Naive thymus-derived CD4-positive, alpha-beta T cell (primary cell): ENCODE measurements at regions of chr18 and their contacts with region 1.

Region 1: GRCh38 chr18:59268721-59269562 is 4.3 kb downstream of the RAX start:
- DNase-seq: peak in 1 of 9 donors; percentile 61
- ATAC-seq: peak; percentile 40
- H3K4me3 ChIP-seq: no peak overlapping the region
- H3K4me3 Mint-ChIP-seq: peak overlapping the region in 7 of 10 donors; percentile 36 to 83 (median 71)
- H3K27ac ChIP-seq: no peak overlapping the region
- H3K27ac Mint-ChIP-seq: no peak overlapping the region
- H3K4me1 ChIP-seq: no peaks in the 10 kb centered on the region
- H3K4me1 Mint-ChIP-seq: peaks cover 16 to 54% (median 27%) of the 10 kb centered on the region in 7 donors
- H3K27me3 ChIP-seq: peaks cover 7% of the 10 kb centered on the region in 2 donors
- H3K27me3 Mint-ChIP-seq: peaks cover 64 to 86% (median 71%) of the 10 kb centered on the region in 5 donors

Region 2: DNA sequence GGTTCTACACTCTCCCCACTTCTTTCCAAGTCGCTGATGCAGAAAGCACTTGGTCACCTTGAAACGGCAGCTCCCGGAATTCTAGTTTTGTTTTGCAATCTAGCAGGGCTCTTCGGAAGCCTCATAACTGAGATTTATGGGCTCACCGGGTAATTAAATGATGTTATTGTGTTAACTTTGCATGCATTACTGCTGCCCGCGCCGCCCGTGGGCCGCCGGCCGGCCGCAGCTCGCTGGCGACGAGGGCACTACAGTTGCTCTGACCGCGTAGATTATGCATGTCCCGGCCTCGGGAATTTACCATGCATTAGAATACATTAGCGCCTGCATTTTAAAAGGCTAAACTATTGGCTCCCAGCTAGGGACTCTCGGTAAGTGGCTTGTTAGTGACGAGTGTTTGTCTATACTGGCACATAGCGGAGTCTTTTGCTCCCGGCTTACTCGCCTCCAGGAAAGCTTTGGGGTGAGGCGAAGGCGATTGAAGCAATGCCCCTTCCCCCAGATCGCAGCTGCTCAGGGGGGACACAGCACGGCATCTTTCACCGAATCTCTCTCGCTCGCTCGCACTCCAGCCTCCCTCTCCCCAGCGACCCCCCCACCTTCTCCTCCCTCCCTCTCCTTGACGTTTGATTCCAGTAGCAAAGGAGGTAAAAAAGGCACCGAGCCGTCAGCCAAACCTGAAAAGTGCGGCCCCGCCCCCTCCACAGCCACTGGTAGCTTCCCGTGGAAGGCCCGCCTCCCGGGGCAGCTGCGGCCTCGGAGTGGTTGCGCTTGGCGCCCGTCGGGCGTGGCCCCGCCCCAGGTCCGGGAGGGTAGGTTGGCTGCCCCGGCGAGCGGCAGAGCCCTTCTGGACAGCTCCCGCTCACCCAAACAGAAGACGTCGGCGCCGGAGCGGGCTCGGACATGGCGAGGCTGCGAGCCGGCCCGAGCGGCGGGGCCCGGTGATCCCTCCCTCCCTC is 1834.1 kb before region 1 on chr18 and contains the start of gene ONECUT2:
- CTCF ChIA-PET with region 1: no interaction called
- POLR2A ChIA-PET with region 1: no interaction called
- intact Hi-C with region 1: loop called in 1 of 2 experiments (anchors 5 kb)
- DNase-seq: peak in 8 of 9 donors; percentile 23 to 47 (median 40)
- ATAC-seq: peak; percentile 87
- H3K4me3 ChIP-seq: peak within 1 kb of the TSS; percentile 27
- H3K4me3 Mint-ChIP-seq: peak within 1 kb of the TSS; percentile 68 to 84 (median 76)
- H3K27ac ChIP-seq: no peak within 1 kb of the TSS
- H3K27ac Mint-ChIP-seq: peak within 1 kb of the TSS in 4 of 9 donors; percentile 8 to 77 (median 46)
- H3K4me1 ChIP-seq: peaks cover 1 to 12% of the 10 kb centered on the region in 2 donors
- H3K4me1 Mint-ChIP-seq: peaks cover 20 to 64% (median 42%) of the 10 kb centered on the region in 7 donors
- H3K27me3 ChIP-seq: peaks cover 8 to 44% of the 10 kb centered on the region in 2 donors
- H3K27me3 Mint-ChIP-seq: peaks cover 78 to 90% (median 84%) of the 10 kb centered on the region in 5 donors
- total RNA-seq, gene ONECUT2: not detected

Region 3: DNA sequence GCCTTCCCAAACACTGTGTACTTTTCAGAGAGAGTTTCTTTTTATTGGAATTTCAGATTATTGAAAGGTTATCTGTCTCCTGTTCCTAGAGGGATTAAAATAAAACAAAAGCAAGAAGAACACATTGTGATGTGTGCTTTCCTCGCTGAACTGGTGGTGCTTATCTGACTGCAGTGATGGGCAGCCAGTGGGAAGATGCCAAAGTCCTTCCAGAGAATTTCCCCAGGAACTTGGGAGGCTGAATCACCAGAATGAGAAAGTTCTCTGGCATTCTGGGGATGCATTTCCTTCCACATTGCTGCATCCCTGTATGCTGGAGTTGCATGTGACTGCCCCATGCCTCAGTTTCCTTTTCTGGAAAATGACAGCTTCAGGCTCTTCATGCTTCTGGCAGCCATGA is 183.1 kb before region 1 on chr18:
- CTCF ChIA-PET with region 1: no interaction called
- POLR2A ChIA-PET with region 1: no interaction called
- intact Hi-C with region 1: loop called in 1 of 2 experiments (anchors 1 kb)
- DNase-seq: no peak
- ATAC-seq: no peak
- H3K4me3 ChIP-seq: no peak overlapping the region
- H3K4me3 Mint-ChIP-seq: no peak overlapping the region
- H3K27ac ChIP-seq: no peak overlapping the region
- H3K27ac Mint-ChIP-seq: no peak overlapping the region
- H3K4me1 ChIP-seq: peaks cover 0 to 8% of the 10 kb centered on the region in 2 donors
- H3K4me1 Mint-ChIP-seq: peaks cover 3 to 18% (median 13%) of the 10 kb centered on the region in 7 donors
- H3K27me3 ChIP-seq: peaks cover 0 to 4% of the 10 kb centered on the region in 2 donors
- H3K27me3 Mint-ChIP-seq: peaks cover 12 to 22% (median 20%) of the 10 kb centered on the region in 5 donors

Region 4: GRCh38 chr18:59249205-59249774 is 19.7 kb before region 1 on chr18:
- CTCF ChIA-PET with region 1: no interaction called
- POLR2A ChIA-PET with region 1: no interaction called
- intact Hi-C with region 1: loop called in 1 of 2 experiments (anchors 2 kb)
- DNase-seq: peak in 3 of 9 donors; percentile 9 to 17 (median 16)
- ATAC-seq: no peak
- H3K4me3 ChIP-seq: no peak overlapping the region
- H3K4me3 Mint-ChIP-seq: no peak overlapping the region
- H3K27ac ChIP-seq: no peak overlapping the region
- H3K27ac Mint-ChIP-seq: no peak overlapping the region
- H3K4me1 ChIP-seq: no peaks in the 10 kb centered on the region
- H3K4me1 Mint-ChIP-seq: peaks cover 0 to 2% (median 0%) of the 10 kb centered on the region in 7 donors
- H3K27me3 ChIP-seq: no peaks in the 10 kb centered on the region
- H3K27me3 Mint-ChIP-seq: peaks cover 49 to 67% (median 63%) of the 10 kb centered on the region in 5 donors

Region 5: GRCh38 chr18:59340817-59341216 is 71.9 kb after region 1 on chr18:
- CTCF ChIA-PET with region 1: no interaction called
- POLR2A ChIA-PET with region 1: no interaction called
- intact Hi-C with region 1: no loop called
- DNase-seq: no peak
- ATAC-seq: no peak
- H3K4me3 ChIP-seq: no peak overlapping the region
- H3K4me3 Mint-ChIP-seq: peak overlapping the region in 1 of 10 donors; percentile 41
- H3K27ac ChIP-seq: no peak overlapping the region
- H3K27ac Mint-ChIP-seq: peak overlapping the region in 2 of 9 donors; percentile 9 to 32
- H3K4me1 ChIP-seq: no peaks in the 10 kb centered on the region
- H3K4me1 Mint-ChIP-seq: peaks cover 8 to 41% (median 37%) of the 10 kb centered on the region in 7 donors
- H3K27me3 ChIP-seq: no peaks in the 10 kb centered on the region
- H3K27me3 Mint-ChIP-seq: no peaks in the 10 kb centered on the region

Region 6: DNA sequence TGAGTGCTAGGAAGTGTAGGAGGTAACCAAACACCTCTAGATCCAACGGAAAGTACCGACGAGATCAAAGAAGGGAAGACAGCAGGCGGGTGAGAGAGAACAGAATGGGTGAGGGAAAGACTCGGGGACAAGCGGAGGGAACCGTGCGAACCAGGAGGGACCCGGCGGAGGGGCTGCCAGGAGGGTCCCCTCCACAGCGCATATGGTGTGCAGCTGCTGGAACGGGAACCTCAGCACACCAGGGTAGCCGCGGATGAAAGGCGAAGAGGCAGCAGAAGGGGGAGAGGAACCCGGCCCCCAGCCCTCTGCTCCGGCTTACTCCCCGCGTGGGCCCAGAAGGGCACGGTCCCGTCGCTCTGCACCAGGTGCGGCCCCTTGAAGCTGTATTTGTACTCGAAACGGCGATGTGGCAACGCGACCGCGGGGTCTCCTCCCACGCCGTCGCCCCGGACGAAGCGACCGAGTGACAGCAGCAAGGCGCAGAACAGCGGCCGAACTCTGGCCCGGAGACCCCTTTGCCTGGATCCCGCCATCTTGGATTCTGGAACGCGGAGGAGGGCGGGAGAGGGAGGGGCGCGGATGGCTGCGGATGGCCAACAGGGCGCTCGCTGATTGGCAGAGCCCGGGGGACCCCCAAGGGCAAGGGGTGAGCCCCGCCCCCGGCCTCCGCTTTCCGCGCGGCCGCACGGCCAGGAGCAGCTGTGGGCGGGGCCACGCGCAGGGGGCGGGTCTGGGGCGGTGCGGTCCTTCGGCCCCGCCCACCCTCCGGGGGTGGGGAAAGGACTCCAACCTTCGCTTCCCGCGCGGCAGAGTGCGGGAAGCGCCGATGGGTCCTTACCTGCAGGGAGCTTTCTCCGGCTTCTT is 90.0 kb after region 1 on chr18 and contains the start of gene LMAN1:
- CTCF ChIA-PET with region 1: no interaction called
- POLR2A ChIA-PET with region 1: no interaction called
- intact Hi-C with region 1: loop called in 1 of 2 experiments (anchors 5 kb)
- DNase-seq: peak; percentile 73 to 98 (median 83)
- ATAC-seq: peak; percentile 97
- H3K4me3 ChIP-seq: peak within 1 kb of the TSS; percentile 81
- H3K4me3 Mint-ChIP-seq: peak within 1 kb of the TSS; percentile 88 to 99 (median 96)
- H3K27ac ChIP-seq: peak within 1 kb of the TSS; percentile 86
- H3K27ac Mint-ChIP-seq: peak within 1 kb of the TSS; percentile 90 to 98 (median 93)
- H3K4me1 ChIP-seq: peaks cover 3 to 20% of the 10 kb centered on the region in 2 donors
- H3K4me1 Mint-ChIP-seq: peaks cover 11 to 45% (median 39%) of the 10 kb centered on the region in 7 donors
- H3K27me3 ChIP-seq: no peaks in the 10 kb centered on the region
- H3K27me3 Mint-ChIP-seq: peaks cover 0 to 9% (median 0%) of the 10 kb centered on the region in 5 donors
- total RNA-seq, gene LMAN1: 34.6 to 120 (median 46.3) TPM

Region 7: DNA sequence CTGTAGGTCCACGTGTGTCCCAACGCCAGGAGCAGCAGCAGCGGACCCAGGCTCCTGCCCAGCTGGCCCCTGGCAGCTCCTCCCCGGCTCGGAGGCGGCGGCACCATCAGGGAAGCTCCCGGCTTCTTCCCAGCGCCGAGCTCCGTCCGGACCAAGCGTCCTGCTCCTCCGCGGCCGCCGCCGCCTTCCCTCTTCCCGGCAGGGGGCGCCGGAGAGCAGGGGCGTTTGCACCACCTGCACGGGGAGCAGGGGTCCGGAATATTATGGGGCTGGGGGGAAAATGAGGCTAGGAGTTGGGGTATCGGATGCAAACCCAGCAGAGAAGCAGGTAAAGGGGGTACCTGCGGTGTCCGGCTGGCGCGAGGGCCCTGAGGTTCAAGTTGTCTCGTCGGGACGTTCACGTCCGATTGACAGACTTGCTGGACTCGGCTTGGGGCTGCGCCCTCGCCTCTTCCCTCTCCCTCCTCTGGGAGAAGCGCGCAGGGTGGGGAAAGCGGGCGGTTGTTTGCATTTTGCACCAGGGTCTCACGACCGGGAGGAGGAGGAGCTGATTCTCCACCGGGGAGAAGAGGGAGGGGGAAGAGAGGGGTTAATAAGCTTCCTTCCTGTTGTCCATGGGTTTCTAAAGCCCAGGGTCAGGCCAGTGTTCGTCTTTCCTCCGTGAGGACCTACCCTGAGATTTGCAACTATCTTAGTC is 428.4 kb after region 1 on chr18 and contains the start of gene CCBE1:
- CTCF ChIA-PET with region 1: no interaction called
- POLR2A ChIA-PET with region 1: no interaction called
- intact Hi-C with region 1: loop called in 1 of 2 experiments (anchors 10 kb)
- DNase-seq: peak in 1 of 9 donors; percentile 70
- ATAC-seq: no peak
- H3K4me3 ChIP-seq: no peak within 1 kb of the TSS
- H3K4me3 Mint-ChIP-seq: peak within 1 kb of the TSS in 8 of 10 donors; percentile 13 to 62 (median 36)
- H3K27ac ChIP-seq: no peak within 1 kb of the TSS
- H3K27ac Mint-ChIP-seq: no peak within 1 kb of the TSS
- H3K4me1 ChIP-seq: no peaks in the 10 kb centered on the region
- H3K4me1 Mint-ChIP-seq: peaks cover 0 to 12% (median 6%) of the 10 kb centered on the region in 7 donors
- H3K27me3 ChIP-seq: peaks cover 0 to 8% of the 10 kb centered on the region in 2 donors
- H3K27me3 Mint-ChIP-seq: peaks cover 43 to 66% (median 49%) of the 10 kb centered on the region in 5 donors
- total RNA-seq, gene CCBE1: not detected